ENCODE measurements at regions of chr5 and their contacts with region 1.

Region 1: DNA sequence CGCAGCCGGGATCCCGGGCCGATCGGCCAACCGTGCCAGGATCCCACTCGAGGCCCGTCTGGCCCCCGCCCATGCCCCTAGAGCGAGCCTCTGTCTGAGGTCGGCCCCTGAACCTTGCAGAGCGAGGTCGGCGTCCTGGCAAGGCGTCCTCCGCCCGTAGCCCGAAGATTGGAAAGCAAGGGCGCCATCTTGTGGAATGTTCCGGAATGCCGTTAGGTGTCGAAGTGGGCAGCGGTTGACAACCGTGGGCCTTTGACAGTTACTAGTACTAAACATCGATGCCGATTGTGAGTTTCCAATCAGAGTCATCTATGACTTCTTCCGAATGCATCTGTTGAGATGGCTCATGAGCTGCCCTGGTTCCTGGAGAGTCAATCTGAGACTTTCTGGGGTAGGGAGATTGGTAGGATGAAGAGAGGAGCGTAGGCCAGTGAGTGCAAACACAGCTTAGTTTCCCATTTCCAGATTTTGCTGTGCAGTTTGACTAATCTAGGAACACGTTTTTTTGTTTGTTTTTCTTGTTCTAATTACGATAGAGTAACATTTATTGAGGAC is 923 bp upstream of the PLK2 start:
- DNase-seq: peak; percentile 94
- H3K4me3 ChIP-seq: peak overlapping the region; percentile 61 to 84 (median 74)
- H3K27ac ChIP-seq: peak overlapping the region; percentile 92 to 98 (median 95)
- H3K4me1 ChIP-seq: peaks cover 0 to 9% (median 6%) of the 10 kb centered on the region in 4 donors
- H3K27me3 ChIP-seq: no peaks in the 10 kb centered on the region
- CTCF ChIP-seq: peak; percentile 55 to 79 (median 70)
- EP300 ChIP-seq: no peak
- POLR2A ChIP-seq: no peak

Region 2: DNA sequence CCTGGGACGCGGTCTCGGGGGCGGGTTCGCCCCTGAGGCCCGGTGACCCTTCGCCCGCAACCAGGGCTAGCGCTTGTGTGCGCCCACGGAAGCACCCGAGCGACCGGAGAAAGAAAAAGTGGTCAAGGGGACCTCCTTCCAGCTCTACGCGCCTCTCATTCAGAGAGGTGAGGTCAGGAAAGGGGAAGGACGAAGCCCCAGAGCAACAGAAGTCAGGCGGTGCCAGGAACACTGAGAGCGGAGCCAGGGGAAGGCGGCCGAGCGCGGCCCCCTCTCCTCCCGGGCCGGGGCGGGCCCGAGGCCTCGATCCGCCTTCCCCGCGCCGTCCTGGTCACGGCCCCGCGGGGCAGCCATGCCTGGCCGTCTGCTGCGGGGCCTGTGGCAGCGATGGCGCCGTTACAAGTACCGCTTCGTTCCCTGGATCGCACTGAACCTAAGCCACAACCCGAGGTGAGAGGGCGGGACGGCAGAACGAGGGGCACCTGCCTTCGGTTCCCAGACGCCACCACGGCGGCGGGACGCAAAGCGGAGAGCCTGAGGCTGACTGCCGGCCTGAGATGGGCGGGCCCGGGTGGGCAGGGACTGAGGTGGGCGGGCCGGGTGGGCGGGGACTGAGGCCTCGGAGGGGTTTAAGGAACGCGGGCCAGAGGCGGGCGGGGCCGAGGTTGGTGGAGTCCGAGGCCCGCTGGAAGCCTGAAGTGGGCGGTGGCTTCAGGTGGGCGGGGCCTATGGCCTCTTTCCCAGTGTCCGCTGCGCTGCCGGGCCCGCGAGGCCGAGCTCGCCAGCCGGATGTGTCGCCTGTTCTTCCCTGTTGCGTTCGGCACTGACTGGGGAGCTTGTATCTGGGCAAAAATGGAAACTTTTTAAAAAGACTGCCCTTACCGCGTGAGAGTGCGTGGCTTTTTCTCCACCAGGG is 1551.3 kb before region 1 on chr5 and contains the start of gene SETD9:
- intact Hi-C with region 1: loop called (anchors 5 kb)
- DNase-seq: peak; percentile 99
- H3K4me3 ChIP-seq: peak within 1 kb of the TSS; percentile 54 to 73 (median 69)
- H3K27ac ChIP-seq: peak within 1 kb of the TSS; percentile 90 to 98 (median 96)
- H3K4me1 ChIP-seq: peaks cover 0 to 9% (median 7%) of the 10 kb centered on the region in 4 donors
- H3K27me3 ChIP-seq: no peaks in the 10 kb centered on the region
- CTCF ChIP-seq: no peak
- EP300 ChIP-seq: no peak
- POLR2A ChIP-seq: peak; percentile 68 to 69
- total RNA-seq, gene SETD9: 6.6 to 30.7 (median 19.4) TPM

Region 3: GRCh38 chr5:57298295-57298984 is 1162.4 kb before region 1 on chr5:
- intact Hi-C with region 1: loop called (anchors 1 kb)
- DNase-seq: peak; percentile 89
- H3K4me3 ChIP-seq: peak overlapping the region in 1 of 4 donors; percentile 19
- H3K27ac ChIP-seq: peak overlapping the region in 2 of 4 donors; percentile 2 to 48
- H3K4me1 ChIP-seq: peaks cover 0 to 5% (median 2%) of the 10 kb centered on the region in 4 donors
- H3K27me3 ChIP-seq: no peaks in the 10 kb centered on the region
- CTCF ChIP-seq: peak; percentile 37 to 75 (median 74)
- EP300 ChIP-seq: no peak
- POLR2A ChIP-seq: no peak

Region 4: DNA sequence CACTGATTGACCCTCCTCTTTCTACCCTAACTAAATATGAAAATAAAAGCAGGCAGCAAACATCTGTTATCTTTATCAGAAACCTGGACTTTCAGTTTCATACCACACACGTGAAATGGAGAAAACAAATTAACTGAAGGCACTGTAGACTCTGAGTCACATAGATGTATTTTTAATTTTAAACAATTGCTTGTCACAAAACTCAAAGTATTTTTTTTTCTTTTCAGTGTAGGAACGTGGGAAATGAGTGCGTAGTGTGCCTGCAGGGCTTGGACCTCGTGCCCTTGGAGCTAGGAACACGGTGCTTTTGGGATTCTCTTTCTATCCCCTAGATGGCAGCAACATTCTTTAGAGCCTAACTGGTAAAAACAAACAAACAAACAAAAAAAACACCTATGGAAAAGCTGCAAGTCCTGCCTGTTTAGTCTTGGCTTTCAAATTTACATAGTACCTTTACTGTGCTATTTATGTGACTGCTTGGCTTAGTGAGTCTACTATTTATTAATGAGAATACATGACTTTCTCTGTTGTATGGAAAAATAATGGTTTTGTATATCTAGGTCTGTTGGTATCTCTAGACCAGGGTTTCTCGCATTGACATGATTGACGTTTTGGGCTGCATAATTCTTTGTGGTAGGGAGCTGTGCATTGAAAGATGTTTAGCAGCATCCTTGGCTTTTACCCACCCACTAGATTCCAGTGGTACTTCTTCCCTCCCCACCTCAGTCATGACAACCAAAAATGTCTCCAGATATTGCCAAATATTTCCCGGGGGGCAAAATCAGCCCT is 961.4 kb before region 1 on chr5:
- intact Hi-C with region 1: loop called (anchors 5 kb)
- DNase-seq: no peak
- H3K4me3 ChIP-seq: peak overlapping the region in 2 of 4 donors; percentile 11 to 15
- H3K27ac ChIP-seq: no peak overlapping the region
- H3K4me1 ChIP-seq: peaks cover 0 to 4% (median 0%) of the 10 kb centered on the region in 4 donors
- H3K27me3 ChIP-seq: no peaks in the 10 kb centered on the region
- CTCF ChIP-seq: peak in 2 of 4 experiments; percentile 11 to 40
- EP300 ChIP-seq: no peak
- POLR2A ChIP-seq: no peak

Region 5: GRCh38 chr5:57552033-57552432 is 908.8 kb before region 1 on chr5:
- intact Hi-C with region 1: no loop called
- DNase-seq: no peak
- H3K4me3 ChIP-seq: no peak overlapping the region
- H3K27ac ChIP-seq: peak overlapping the region in 1 of 4 donors; percentile 5
- H3K4me1 ChIP-seq: no peaks in the 10 kb centered on the region
- H3K27me3 ChIP-seq: no peaks in the 10 kb centered on the region
- CTCF ChIP-seq: no peak
- EP300 ChIP-seq: no peak
- POLR2A ChIP-seq: no peak

Region 6: DNA sequence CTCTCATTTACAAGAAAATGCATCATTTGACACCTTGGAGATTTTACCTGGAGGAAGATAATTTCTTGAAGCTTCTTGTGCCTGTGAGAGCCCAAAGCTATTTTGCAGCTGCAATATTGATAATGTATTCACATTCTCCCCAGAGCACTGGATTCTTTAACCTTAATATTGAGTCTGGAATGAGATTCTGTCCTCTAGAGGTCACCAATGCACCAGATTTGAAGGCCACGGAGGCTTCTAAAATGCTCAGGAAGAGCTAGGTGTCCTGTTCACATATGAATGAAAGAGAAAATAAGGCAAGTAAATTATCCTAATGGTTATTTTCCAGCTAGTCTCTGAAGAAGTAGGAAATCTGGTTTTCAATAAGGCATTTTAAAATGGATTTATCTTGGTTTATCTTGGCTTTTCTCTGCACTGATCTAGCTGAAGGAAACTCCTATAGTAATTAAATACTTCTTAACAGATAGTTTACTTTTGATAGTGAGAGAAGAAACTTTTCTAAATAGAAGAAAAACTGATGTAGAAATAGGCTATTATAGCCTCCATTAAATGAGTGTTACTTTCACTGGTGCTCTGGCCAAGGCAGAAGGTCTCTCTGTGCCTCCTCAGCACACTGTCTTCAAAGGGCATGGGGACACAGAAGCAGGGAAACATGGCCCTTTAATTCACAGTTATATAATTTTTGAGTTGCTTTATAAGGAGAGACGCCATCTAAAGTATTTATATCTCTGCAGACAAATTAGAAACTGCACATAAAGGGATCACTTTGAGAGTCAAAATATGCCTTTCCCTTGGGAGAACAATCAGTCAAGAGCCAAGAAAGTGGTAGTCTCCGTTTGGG is 681.2 kb before region 1 on chr5:
- intact Hi-C with region 1: loop called (anchors 1 kb)
- DNase-seq: no peak
- H3K4me3 ChIP-seq: no peak overlapping the region
- H3K27ac ChIP-seq: peak overlapping the region in 2 of 4 donors; percentile 9 to 23
- H3K4me1 ChIP-seq: peaks cover 0 to 8% (median 6%) of the 10 kb centered on the region in 4 donors
- H3K27me3 ChIP-seq: no peaks in the 10 kb centered on the region
- CTCF ChIP-seq: peak; percentile 22 to 55 (median 42)
- EP300 ChIP-seq: no peak
- POLR2A ChIP-seq: no peak